Activated B cell treated with CpG ODN at 0.5 μM for 24 hours (primary cell): ENCODE measurements at regions of chr2 and their contacts with region 1.

Region 1: DNA sequence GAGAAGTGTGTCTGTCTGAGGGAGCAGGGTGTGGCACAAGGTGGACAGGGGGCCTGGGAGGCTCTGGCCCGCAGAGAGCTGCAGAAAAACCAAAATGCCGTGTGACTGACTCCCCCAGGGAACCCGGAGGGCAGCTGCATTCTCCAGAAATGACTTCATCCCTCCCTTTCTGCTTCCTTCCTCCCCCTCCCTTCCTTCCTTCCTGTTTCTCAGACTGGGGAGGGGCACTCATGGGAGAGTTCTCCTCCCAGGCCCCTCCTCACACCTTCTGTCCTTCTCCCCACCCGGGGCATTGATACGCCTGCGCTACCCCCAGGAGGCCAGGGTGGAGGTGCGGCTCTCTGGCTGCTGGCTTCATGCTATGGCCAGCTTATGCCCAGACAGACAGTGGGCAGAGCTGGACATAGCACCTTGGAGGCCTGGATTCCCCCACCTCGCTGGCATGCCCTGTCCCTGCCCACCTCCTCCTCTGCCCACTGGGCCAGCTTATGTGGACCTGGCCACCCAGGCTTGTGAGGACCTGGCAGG is 8.2 kb upstream of the GPR17 start:
- DNase-seq: no peak
- ATAC-seq: no peak
- H3K4me3 Mint-ChIP-seq: peak overlapping the region; percentile 28
- H3K27ac Mint-ChIP-seq: peak overlapping the region; percentile 93
- H3K4me1 Mint-ChIP-seq: peaks cover 92% of the 10 kb centered on the region
- H3K27me3 Mint-ChIP-seq: no peaks in the 10 kb centered on the region
- CTCF ChIP-seq: no peak

Region 2: GRCh38 chr2:126802774-126803433 is 834.9 kb before region 1 on chr2:
- CTCF ChIA-PET with region 1: no interaction called
- POLR2A ChIA-PET with region 1: no interaction called
- intact Hi-C with region 1: no loop called
- DNase-seq: no peak
- ATAC-seq: no peak
- H3K4me3 Mint-ChIP-seq: no peak overlapping the region
- H3K27ac Mint-ChIP-seq: no peak overlapping the region
- H3K4me1 Mint-ChIP-seq: no peaks in the 10 kb centered on the region
- H3K27me3 Mint-ChIP-seq: no peaks in the 10 kb centered on the region
- CTCF ChIP-seq: no peak

Region 3: DNA sequence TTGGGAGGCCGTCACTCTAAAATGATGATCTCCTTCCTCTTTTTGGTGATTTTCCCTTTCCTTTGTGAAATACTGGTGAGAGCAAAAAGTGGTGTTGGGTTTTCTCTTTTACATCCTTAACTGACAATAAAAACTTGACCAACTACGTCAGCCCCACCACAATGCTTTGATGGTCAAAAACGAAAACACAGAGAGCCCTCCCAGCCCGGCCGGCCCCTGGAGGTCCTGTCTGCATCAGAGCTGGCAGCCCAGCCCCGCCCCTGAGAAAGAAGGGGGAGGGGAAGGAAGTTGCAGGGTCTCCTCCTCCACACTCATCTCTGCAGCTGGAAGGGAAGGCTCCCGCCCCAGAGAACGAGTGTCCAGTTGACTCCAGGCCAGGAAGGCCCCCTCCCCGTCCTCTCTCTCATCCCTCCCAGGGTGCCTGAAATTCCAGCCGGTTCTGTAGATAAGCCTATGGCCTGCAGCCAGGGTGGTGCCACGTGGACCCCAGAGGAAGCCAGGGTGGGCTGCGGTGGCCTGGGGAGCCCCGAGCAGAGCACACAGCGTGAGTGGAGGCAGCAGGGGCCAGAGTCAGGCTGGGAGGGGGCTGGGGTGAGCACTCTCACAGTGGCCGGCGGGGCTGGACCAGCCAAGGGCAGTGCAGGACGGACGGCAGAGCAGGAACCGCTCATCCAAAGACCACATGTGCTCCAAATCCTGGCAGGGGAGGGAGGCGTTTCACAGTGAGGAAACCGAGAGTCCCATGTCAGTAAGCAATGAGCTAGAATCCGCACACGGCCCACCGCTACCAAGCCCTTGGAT is 550.6 kb before region 1 on chr2:
- CTCF ChIA-PET with region 1: no interaction called
- POLR2A ChIA-PET with region 1: no interaction called
- intact Hi-C with region 1: loop called (anchors 10 kb)
- DNase-seq: peak; percentile 48
- ATAC-seq: peak; percentile 25
- H3K4me3 Mint-ChIP-seq: peak overlapping the region; percentile 82
- H3K27ac Mint-ChIP-seq: peak overlapping the region; percentile 91
- H3K4me1 Mint-ChIP-seq: peaks cover 67% of the 10 kb centered on the region
- H3K27me3 Mint-ChIP-seq: no peaks in the 10 kb centered on the region
- CTCF ChIP-seq: no peak

Region 4: DNA sequence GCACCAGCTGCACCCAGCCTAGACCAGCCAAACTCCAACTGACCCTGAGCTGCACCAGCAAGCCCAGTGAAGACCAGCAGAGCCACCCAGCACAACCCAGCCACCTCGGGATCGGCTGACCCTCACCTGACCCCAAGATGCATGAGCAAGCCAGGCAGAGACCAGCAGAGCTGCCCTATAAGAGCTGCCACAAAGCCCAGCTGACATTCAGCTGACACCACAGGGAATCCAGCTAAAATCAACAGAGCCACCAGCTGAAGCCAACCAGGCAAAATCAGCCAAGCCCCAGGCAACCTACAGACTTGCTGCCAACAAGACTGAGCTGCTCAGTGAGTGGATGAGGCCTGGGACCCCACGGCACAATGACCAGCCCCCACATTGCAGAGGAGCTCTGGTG is 472.3 kb before region 1 on chr2:
- CTCF ChIA-PET with region 1: no interaction called
- POLR2A ChIA-PET with region 1: no interaction called
- intact Hi-C with region 1: no loop called
- DNase-seq: no peak
- ATAC-seq: no peak
- H3K4me3 Mint-ChIP-seq: no peak overlapping the region
- H3K27ac Mint-ChIP-seq: no peak overlapping the region
- H3K4me1 Mint-ChIP-seq: peaks cover 10% of the 10 kb centered on the region
- H3K27me3 Mint-ChIP-seq: peaks cover 3% of the 10 kb centered on the region
- CTCF ChIP-seq: no peak

Region 5: GRCh38 chr2:127563458-127564428 is 74.0 kb before region 1 on chr2:
- CTCF ChIA-PET with region 1: no interaction called
- POLR2A ChIA-PET with region 1: no interaction called
- intact Hi-C with region 1: no loop called
- DNase-seq: no peak
- ATAC-seq: peak; percentile 64
- H3K4me3 Mint-ChIP-seq: no peak overlapping the region
- H3K27ac Mint-ChIP-seq: peak overlapping the region; percentile 67
- H3K4me1 Mint-ChIP-seq: peaks cover 15% of the 10 kb centered on the region
- H3K27me3 Mint-ChIP-seq: no peaks in the 10 kb centered on the region
- CTCF ChIP-seq: no peak

Region 6: GRCh38 chr2:127576433-127577207 is 61.2 kb before region 1 on chr2:
- CTCF ChIA-PET with region 1: no interaction called
- POLR2A ChIA-PET with region 1: no interaction called
- intact Hi-C with region 1: no loop called
- DNase-seq: no peak
- ATAC-seq: no peak
- H3K4me3 Mint-ChIP-seq: peak overlapping the region; percentile 50
- H3K27ac Mint-ChIP-seq: no peak overlapping the region
- H3K4me1 Mint-ChIP-seq: peaks cover 64% of the 10 kb centered on the region
- H3K27me3 Mint-ChIP-seq: no peaks in the 10 kb centered on the region
- CTCF ChIP-seq: no peak

Region 7: GRCh38 chr2:127619877-127620705 is 17.7 kb before region 1 on chr2:
- CTCF ChIA-PET with region 1: interaction called, 4 read pairs
- POLR2A ChIA-PET with region 1: interaction called, 7 read pairs
- intact Hi-C with region 1: loop called (anchors 1 kb)
- DNase-seq: peak; percentile 21
- ATAC-seq: peak; percentile 56
- H3K4me3 Mint-ChIP-seq: peak overlapping the region; percentile 70
- H3K27ac Mint-ChIP-seq: peak overlapping the region; percentile 76
- H3K4me1 Mint-ChIP-seq: peaks cover 82% of the 10 kb centered on the region
- H3K27me3 Mint-ChIP-seq: no peaks in the 10 kb centered on the region
- CTCF ChIP-seq: no peak

Region 8: GRCh38 chr2:127649684-127650040 is 11.9 kb after region 1 on chr2:
- CTCF ChIA-PET with region 1: interaction called, 13 read pairs
- POLR2A ChIA-PET with region 1: interaction called, 6 read pairs
- intact Hi-C with region 1: loop called (anchors 2 kb)
- DNase-seq: peak; percentile 68
- ATAC-seq: peak; percentile 80
- H3K4me3 Mint-ChIP-seq: peak overlapping the region; percentile 52
- H3K27ac Mint-ChIP-seq: no peak overlapping the region
- H3K4me1 Mint-ChIP-seq: peaks cover 63% of the 10 kb centered on the region
- H3K27me3 Mint-ChIP-seq: no peaks in the 10 kb centered on the region
- CTCF ChIP-seq: no peak

Region 9: DNA sequence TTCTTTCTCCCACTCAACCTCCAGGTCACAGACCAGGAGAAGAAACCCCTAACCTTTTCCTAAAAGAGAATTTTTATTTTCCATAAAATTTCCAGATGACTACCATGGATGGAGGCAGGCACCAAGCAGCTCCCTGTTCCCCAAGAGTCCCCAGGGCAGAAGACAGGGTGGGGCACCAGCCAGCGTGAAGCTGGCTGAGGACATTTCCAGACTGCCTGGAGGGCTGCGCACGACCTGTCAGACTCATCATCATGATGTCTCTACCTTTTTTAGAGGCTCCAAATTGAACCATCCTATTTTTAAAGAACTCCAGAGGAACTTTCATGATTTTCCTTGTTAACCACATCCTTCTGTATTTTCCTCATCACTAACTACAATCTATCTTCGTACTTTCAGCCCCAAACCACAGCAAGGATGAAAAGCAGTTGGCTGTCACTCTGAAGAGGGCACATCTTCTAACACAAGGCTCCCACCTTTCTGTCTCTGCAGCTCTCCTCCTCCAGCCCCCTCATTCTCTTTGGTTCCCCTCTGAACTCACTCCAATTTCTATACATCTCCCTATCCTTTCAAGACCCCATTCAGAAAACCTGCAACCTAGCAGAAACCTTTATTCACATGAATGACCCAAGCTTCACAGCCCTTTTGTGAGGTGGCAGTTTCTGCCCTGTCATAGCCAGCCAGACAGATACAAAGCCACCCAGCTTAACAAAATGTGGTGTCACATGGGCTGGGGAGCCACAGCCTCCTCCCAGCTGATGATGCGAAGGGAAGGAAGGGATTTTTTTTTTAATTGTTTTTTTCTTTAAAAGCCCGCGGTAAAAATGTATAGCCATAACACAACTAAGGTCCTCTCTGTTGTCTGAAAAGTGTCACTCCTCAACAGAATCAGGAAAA is 236.8 kb after region 1 on chr2:
- CTCF ChIA-PET with region 1: no interaction called
- POLR2A ChIA-PET with region 1: interaction called, 13 read pairs
- intact Hi-C with region 1: no loop called
- DNase-seq: no peak
- ATAC-seq: no peak
- H3K4me3 Mint-ChIP-seq: no peak overlapping the region
- H3K27ac Mint-ChIP-seq: peak overlapping the region; percentile 3
- H3K4me1 Mint-ChIP-seq: peaks cover 24% of the 10 kb centered on the region
- H3K27me3 Mint-ChIP-seq: no peaks in the 10 kb centered on the region
- CTCF ChIP-seq: no peak